Colonic mucosa (tissue), 4 donors: ENCODE measurements at regions of chr2 and their contacts with region 1.

Region 1: GRCh38 chr2:46296840-46297545 is at the start of gene EPAS1:
- DNase-seq: peak; percentile 97
- H3K4me3 ChIP-seq: peak within 1 kb of the TSS; percentile 74
- H3K27ac ChIP-seq: peak within 1 kb of the TSS; percentile 87
- H3K4me1 ChIP-seq: peaks cover 7% of the 10 kb centered on the region
- H3K27me3 ChIP-seq: no peaks in the 10 kb centered on the region
- CTCF ChIP-seq: no peak
- total RNA-seq, gene EPAS1: 116 to 140 TPM

Region 2: DNA sequence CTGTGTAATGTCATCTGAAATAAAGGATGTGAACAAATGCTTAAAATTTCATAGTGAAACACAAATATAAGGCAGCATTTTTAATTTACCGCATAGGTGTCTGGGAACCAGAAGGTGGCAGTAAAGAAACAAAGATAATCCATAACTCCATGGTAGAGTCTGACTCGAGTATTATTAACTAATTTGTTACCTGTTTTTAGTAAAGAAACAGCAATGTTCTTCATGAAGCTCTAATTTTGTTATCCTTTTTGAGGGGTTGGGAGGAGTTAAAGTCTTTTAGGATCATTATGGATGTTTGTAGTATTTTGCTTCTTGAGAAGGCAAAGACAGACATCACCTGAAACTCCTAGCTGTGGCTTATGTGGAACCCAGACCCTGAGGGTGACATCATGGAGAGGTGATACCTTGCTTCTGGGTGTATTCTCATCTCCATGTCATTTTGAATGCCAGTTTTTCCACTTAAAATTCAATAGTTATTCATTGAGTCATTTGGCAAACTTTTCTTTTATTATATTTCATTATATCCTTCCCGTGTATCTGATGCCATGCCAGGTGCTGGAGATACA is 286.0 kb before region 1 on chr2:
- intact Hi-C with region 1: loop called (anchors 10 kb)
- DNase-seq: no peak
- H3K4me3 ChIP-seq: no peak overlapping the region
- H3K27ac ChIP-seq: no peak overlapping the region
- H3K4me1 ChIP-seq: no peaks in the 10 kb centered on the region
- H3K27me3 ChIP-seq: no peaks in the 10 kb centered on the region
- CTCF ChIP-seq: peak; percentile 57

Region 3: GRCh38 chr2:46062637-46063412 is 234.2 kb before region 1 on chr2:
- intact Hi-C with region 1: loop called (anchors 2 kb)
- DNase-seq: peak; percentile 81
- H3K4me3 ChIP-seq: no peak overlapping the region
- H3K27ac ChIP-seq: no peak overlapping the region
- H3K4me1 ChIP-seq: no peaks in the 10 kb centered on the region
- H3K27me3 ChIP-seq: no peaks in the 10 kb centered on the region
- CTCF ChIP-seq: peak; percentile 81

Region 4: GRCh38 chr2:46335391-46336282 is 38.6 kb after region 1 on chr2:
- intact Hi-C with region 1: loop called (anchors 5 kb)
- DNase-seq: peak; percentile 75
- H3K4me3 ChIP-seq: peak overlapping the region; percentile 26
- H3K27ac ChIP-seq: peak overlapping the region; percentile 88
- H3K4me1 ChIP-seq: peaks cover 18% of the 10 kb centered on the region
- H3K27me3 ChIP-seq: no peaks in the 10 kb centered on the region
- CTCF ChIP-seq: no peak

Region 5: DNA sequence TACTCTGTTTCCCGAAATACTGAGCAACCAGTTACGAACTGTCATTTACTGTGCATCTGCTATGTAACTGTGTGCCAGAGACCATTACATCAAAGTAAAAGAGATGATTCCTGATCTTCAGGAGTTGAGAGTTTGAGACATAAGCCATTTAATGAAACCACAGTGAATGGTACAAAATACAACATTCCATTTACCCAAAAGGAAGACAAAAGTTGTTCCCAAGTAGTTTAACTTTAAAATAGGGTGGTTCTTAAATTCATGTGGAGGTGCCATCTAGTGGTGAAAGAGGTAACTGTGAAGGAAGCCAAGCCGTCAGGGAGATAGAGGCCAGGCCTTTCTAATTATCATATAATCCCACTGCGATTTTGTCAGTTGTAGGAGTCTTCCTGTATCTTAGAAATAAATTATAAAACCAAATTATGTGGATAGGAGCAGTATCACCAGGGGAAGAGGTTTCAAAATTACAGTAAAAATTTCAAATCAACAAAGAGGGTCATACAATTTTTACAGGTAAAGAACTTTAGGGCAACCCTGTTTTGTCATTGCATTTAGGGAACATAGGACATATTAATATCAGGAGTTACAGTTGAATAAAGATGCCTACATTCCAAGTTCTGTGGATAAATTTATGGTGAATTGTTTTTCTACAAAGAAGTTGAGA is 67.9 kb after region 1 on chr2:
- intact Hi-C with region 1: loop called (anchors 2 kb)
- DNase-seq: peak; percentile 57
- H3K4me3 ChIP-seq: no peak overlapping the region
- H3K27ac ChIP-seq: no peak overlapping the region
- H3K4me1 ChIP-seq: no peaks in the 10 kb centered on the region
- H3K27me3 ChIP-seq: no peaks in the 10 kb centered on the region
- CTCF ChIP-seq: peak; percentile 87